ENCODE measurements at regions of chr2 and their contacts with region 1.

Region 1: DNA sequence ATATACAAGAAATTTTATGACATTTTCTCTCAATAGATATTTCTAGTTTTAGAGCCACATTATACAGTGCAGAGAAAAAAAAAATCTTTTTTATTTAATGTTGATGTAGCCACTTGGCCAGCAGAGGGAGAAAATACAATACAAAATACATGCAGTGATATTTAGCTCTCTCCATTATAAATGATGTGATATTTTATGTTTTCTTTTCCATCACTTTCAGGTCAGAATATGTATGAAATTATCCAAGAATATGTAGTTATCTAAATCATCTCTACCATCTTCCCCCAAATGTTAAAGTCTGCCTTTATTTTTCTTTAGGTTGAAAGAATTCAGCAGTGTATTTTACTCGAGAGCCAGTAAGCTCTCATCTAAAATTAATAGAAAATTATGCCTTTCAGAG is 533.6 kb upstream of the FSHR start:
- DNase-seq: no peak
- ATAC-seq: no peak
- H3K4me3 ChIP-seq: no peak overlapping the region
- H3K27ac ChIP-seq: no peak overlapping the region
- H3K4me1 ChIP-seq: no peaks in the 10 kb centered on the region
- H3K27me3 ChIP-seq: no peaks in the 10 kb centered on the region

Region 2: DNA sequence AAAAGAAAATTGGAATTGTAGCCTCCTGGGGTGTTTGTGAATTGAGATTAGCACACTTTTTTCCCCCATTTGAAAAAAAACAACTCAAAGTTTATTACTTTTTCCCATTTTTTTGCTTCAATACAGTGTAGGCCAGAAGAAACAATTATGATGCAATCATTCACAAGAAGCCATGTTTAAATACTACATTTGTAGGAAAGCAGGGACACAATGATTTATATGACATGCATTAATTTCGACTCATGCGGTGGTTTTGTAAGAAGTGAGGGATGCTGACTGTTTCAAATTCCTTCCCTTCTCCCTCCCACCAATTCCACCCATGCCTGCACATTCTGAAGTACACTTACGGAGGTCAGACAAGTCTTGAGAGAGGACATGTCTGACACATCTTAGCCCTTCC is 240.6 kb after region 1 on chr2:
- intact Hi-C with region 1: no loop called
- DNase-seq: no peak
- ATAC-seq: no peak
- H3K4me3 ChIP-seq: no peak overlapping the region
- H3K27ac ChIP-seq: no peak overlapping the region
- H3K4me1 ChIP-seq: no peaks in the 10 kb centered on the region
- H3K27me3 ChIP-seq: no peaks in the 10 kb centered on the region

Region 3: DNA sequence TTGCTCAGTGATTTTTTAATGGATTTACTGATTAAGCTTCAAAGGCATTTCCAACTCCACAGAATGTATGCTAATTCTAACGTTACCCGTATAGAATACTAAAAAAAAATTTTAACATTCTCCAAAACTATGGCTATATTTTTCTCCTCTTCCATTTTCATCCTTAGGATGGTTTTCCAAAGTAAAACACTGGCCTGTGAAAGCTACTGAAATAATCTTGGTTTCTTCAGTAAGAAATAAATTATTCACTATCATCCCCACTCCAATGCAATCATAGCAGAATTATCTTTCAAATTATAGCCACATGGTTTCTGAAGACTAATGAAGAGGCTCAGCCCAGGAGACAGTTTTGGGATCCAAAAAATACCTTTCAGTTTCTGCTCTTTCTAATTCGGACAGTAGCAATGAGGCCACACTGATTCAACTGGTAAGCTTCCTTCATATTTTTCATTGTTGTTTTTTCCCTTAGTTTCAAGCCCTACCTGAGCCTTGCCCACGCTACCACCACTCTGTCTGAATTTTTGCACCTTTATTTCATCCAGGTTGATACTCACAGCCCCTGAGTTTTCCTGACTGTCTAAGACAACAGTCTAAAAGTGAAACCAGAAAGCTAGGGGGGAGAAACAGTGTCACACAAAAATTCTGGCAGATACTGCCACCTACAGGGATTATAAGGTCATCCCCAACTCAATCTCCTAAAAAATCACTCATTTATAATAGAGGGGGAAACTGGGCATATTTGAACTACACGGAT is 456.1 kb after region 1 on chr2:
- intact Hi-C with region 1: loop called in 1 of 4 experiments (anchors 10 kb)
- DNase-seq: no peak
- ATAC-seq: peak; percentile 70 to 81
- H3K4me3 ChIP-seq: peak overlapping the region; percentile 83
- H3K27ac ChIP-seq: peak overlapping the region; percentile 50
- H3K4me1 ChIP-seq: no peaks in the 10 kb centered on the region
- H3K27me3 ChIP-seq: no peaks in the 10 kb centered on the region

Region 4: DNA sequence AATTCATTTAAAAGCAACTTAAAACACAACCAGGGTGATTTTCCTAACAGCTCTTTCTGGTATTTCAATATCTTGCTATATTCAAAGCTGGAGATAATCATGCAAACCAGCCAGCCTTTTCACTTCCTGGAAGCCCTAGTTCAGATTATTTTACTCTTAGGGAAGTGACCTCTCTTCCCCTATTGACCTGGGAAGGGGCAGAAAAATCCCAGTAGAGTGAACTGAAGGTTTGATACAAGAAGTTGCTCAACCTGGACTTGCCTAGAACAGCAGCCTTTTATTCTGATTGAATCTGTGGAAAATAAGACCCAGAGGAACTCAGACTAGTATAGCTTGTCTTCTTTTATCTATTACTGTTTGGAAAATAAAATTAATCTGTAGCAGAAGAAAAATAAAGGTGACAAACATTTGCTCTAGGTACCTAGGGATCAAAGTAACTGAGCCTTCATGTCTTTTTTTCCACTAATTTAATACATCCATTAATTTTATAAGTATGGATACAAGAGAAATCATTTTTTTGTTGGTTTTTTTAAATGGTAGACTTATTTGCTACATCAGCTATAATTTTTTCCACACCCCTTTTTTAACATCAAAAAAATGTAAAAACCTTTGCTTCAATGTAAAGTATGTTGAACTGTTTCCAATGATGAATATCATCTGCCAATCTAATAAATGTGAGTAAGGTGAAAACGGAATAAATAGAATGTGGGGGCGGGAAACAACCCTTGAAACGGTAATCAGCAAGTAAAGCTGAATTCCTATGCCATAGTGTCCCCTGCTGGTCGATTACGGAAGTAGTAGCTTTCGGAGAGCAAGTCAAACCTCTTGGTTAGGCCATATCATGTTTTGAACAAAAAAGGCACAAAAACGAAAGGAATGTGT is 714.1 kb after region 1 on chr2:
- intact Hi-C with region 1: loop called in 1 of 4 experiments (anchors 10 kb)
- DNase-seq: peak in 1 of 3 donors; percentile 16
- ATAC-seq: peak; percentile 41 to 70
- H3K4me3 ChIP-seq: no peak overlapping the region
- H3K27ac ChIP-seq: no peak overlapping the region
- H3K4me1 ChIP-seq: no peaks in the 10 kb centered on the region
- H3K27me3 ChIP-seq: no peaks in the 10 kb centered on the region

Measured in right cardiac atrium (tissue), 5 donors.